Activated T-helper 1 cell treated with anti-CD3 and anti-CD28 coated beads, Interleukin-12 subunit alpha, Interleukin-12 subunit beta, Interleukin-2, Interleukin-4 antibody, amounts not matched to agents 30 ng/mL and 10 ng/mL and 1 ng/mL, durations not matched to agents 14 hours and 24 hours and 36 hours (primary cell): ENCODE measurements at regions of chr19 and their contacts with region 1.

Region 1: DNA sequence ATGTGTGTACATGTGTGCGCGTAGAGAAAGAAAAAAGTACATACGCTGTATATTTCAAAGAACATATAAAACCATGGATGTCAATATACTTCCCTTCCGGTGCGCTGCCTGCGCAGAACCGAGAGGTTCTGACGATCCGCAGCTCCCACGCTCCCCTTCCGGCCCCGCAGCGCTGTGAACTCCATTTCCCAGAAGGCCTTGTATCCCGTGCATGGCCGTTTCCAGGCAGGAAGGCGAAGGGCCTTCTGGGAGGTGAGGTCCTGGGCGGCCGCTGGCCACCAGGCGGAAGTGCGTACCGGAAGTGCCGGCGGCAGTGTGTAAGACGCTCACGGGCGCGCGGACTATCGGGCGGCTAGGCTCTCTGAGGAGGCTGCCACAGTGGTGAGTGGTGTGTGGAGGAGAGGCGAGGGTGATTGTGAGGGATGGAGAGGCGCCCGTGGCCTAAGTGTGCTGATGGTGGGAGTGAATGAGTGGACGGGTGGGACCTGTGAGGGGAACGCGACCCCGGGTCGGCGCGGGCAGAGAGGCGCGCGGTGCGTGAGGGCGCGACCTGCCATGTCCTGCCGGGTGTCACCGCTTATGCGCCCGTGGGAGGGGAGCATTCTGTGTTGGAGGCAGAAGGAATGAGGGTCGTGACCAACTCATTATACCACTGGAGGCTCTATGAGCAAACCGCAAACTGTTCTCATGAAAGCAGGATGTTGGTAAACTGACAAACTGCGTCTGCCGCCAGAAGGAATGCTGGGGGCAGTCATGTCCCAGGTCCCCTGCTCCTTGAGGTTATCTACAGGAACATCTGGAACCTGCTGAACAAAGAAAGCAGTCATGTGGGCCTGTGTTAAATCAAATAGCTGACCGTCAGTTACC is at the start of gene ERVK3-1:
- DNase-seq: peak; percentile 95
- H3K4me3 Mint-ChIP-seq: peak within 1 kb of the TSS; percentile 97
- H3K27ac Mint-ChIP-seq: peak within 1 kb of the TSS; percentile 96
- H3K4me1 Mint-ChIP-seq: peaks cover 43% of the 10 kb centered on the region
- H3K27me3 Mint-ChIP-seq: no peaks in the 10 kb centered on the region
- total RNA-seq, gene ERVK3-1: 87.1 and 96.7 TPM in 2 replicates

Region 2: GRCh38 chr19:57527136-57527881 is 778.0 kb before region 1 on chr19 and contains the start of gene ZNF549:
- intact Hi-C with region 1: loop called (anchors 1 kb)
- DNase-seq: peak; percentile 85
- H3K4me3 Mint-ChIP-seq: peak within 1 kb of the TSS; percentile 93
- H3K27ac Mint-ChIP-seq: peak within 1 kb of the TSS; percentile 76
- H3K4me1 Mint-ChIP-seq: peaks cover 20% of the 10 kb centered on the region
- H3K27me3 Mint-ChIP-seq: peaks cover 2% of the 10 kb centered on the region
- total RNA-seq, gene ZNF549: 3.6 and 4.2 TPM in 2 replicates

Region 3: GRCh38 chr19:58278157-58279041 is 26.9 kb before region 1 on chr19 and contains the start of gene ZNF8:
- intact Hi-C with region 1: loop called (anchors 1 kb)
- DNase-seq: peak; percentile 97
- H3K4me3 Mint-ChIP-seq: peak within 1 kb of the TSS; percentile 92
- H3K27ac Mint-ChIP-seq: peak within 1 kb of the TSS; percentile 93
- H3K4me1 Mint-ChIP-seq: peaks cover 23% of the 10 kb centered on the region
- H3K27me3 Mint-ChIP-seq: no peaks in the 10 kb centered on the region
- total RNA-seq, gene ZNF8: 4.0 and 4.4 TPM in 2 replicates

Region 4: DNA sequence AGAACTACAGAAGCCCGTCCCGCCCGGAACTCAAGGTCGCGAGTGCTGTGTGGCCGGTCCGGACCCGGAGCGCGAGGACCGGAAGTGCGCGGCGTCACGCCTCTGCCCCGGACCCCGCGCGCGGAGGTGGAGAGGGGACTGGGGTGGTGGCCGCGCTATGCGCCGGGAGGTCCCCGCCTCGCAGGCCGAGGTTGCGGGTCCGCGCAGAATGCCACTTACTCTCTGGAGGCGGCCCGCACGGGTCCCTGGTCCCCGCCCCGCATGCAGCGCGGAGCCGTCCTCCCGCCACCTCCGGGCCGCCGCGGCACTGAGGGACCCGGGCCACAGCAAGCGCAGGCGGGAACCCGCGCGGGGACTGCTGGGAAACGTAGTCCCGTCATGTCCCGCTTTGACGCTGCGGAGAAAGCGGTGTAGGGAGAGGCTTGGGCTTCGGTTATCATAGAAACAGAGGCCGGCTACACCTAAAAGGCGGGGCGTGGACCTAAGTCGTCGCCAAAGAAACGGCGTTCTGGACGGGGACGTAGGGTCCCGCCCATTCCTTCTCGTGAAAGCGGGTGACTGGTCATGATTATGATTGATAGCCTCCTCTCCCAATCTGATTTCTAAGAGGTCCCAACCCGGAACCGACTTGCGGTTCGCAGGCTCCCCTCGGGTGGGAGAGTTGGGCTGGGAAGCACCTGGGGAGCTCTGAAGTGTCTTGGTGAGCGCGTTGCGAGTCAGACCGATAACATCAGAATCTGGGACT is 75.6 kb after region 1 on chr19 and contains the start of gene ZNF837:
- intact Hi-C with region 1: loop called (anchors 1 kb)
- DNase-seq: peak; percentile 98
- H3K4me3 Mint-ChIP-seq: peak within 1 kb of the TSS; percentile 87
- H3K27ac Mint-ChIP-seq: peak within 1 kb of the TSS; percentile 89
- H3K4me1 Mint-ChIP-seq: peaks cover 22% of the 10 kb centered on the region
- H3K27me3 Mint-ChIP-seq: no peaks in the 10 kb centered on the region
- total RNA-seq, gene ZNF837: 0.86 and 1.4 TPM in 2 replicates

Region 5: GRCh38 chr19:58451358-58452101 is 146.2 kb after region 1 on chr19 and contains the start of gene ZNF324B:
- intact Hi-C with region 1: loop called (anchors 1 kb)
- DNase-seq: peak; percentile 95
- H3K4me3 Mint-ChIP-seq: peak within 1 kb of the TSS; percentile 85
- H3K27ac Mint-ChIP-seq: peak within 1 kb of the TSS; percentile 48
- H3K4me1 Mint-ChIP-seq: peaks cover 18% of the 10 kb centered on the region
- H3K27me3 Mint-ChIP-seq: peaks cover 7% of the 10 kb centered on the region
- total RNA-seq, gene ZNF324B: 14.3 and 15.1 TPM in 2 replicates

Region 6: DNA sequence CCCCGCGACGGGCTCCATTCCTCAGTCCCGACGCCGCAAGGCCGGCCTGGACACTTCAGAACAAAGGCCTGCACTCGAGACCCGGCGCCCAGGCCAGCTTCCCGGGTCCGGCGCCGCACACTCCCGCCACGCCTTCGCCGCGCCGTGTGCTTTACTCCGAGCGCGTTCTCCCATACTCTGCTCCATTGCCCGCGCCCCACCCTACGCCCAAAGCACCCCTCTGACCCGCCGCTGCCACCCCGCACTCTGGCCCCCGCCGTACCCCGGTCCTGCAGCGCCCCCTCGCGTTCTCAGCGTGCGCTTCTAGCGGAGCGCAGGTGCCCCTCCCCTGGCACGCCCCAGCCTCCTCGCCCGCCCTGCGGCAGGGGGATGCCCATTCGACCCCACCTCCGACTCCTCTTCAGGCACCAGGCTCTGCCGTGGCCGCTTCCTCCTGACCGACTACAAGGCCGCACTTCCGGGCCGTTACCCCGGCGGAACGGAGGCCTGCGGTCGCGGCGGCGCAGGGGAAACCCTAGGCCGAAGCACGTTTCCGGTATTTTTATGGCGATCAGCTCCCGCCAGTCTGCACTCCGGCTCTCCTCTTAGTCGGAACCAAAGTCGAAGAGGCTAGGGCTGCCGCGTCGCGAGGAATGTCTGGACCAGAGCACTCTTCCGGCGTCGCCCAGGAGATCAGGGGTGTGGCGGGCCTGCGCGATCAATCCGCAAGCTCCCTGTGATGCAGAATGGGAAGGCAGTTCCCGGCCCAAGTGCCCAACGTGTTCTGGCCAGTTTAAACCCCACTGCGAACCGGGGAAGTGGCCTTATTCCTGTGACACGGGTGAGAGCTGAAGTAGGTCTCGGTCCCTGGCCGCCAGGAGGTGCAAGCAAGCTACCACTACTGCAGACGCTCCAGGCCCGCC is 214.3 kb after region 1 on chr19 and contains the start of gene ZBTB45:
- intact Hi-C with region 1: loop called (anchors 1 kb)
- DNase-seq: peak; percentile 91
- H3K4me3 Mint-ChIP-seq: peak within 1 kb of the TSS; percentile 99
- H3K27ac Mint-ChIP-seq: peak within 1 kb of the TSS; percentile 99
- H3K4me1 Mint-ChIP-seq: peaks cover 34% of the 10 kb centered on the region
- H3K27me3 Mint-ChIP-seq: peaks cover 3% of the 10 kb centered on the region
- total RNA-seq, gene ZBTB45: 15.9 and 17.4 TPM in 2 replicates